HepG2 (cell line): ENCODE measurements at regions of chr10 and their contacts with region 1.

Region 1: DNA sequence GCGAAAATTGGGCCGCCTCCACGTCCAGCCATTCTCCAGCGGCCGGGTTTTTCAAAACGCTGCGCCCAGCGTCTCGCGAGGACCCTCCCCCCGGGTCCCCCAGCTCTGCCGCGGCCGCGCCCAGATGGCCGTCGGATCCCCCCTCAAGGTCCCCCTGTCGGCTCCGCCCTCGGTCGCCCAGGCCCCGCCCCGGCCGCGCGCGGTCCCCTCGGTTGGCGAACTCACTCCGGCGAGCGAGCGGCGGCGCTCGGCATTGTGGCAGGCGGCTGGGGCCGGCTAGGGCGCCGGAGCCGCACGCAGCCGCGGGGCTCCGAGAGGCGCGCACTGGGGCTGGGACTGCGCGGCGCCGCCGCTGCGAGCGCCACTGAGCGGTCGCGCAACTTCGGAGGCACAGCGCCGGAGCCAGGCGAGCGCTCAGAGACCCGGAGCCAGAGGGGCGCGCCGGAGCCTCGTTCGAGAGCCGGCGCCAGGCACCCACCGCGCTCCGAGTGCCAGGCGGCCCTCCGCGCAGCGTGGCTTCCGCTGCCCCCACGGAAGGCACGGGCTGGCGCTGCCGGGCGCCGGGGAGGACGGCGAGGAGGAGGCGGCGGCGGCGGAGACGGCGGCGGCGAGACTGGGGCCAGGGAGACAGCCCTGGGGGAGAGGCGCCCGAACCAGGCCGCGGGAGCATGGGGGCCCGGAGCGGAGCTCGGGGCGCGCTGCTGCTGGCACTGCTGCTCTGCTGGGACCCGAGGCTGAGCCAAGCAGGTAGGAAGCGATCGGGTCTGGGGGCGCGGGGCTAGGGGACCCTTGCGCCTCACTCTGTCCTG is at the start of gene UNC5B:
- DNase-seq: peak; percentile 54
- ATAC-seq: peak; percentile 89
- H3K4me3 ChIP-seq: peak within 1 kb of the TSS; percentile 29 to 55 (median 47); a peak in 5 of 6 replicates
- H3K27ac ChIP-seq: no peak within 1 kb of the TSS
- H3K4me1 ChIP-seq: peaks cover 29% of the 10 kb centered on the region
- H3K27me3 ChIP-seq: peaks cover 16 to 77% of the 10 kb centered on the region in 2 experiments
- CTCF ChIP-seq: peak; percentile 16; the same call in 1 of the 2 replicates
- EP300 ChIP-seq: no peak
- POLR2A ChIP-seq: no peak
- RAD21 ChIP-seq: peak; percentile 42
- total RNA-seq, gene UNC5B: 0.07 TPM in 1 of 2 replicates, not detected in the other

Region 2: GRCh38 chr10:70146489-70147258 is 1065.8 kb before region 1 on chr10 and contains the start of gene TYSND1:
- CTCF ChIA-PET with region 1: no interaction called
- POLR2A ChIA-PET with region 1: no interaction called
- in situ Hi-C with region 1: no loop called
- intact Hi-C with region 1: no loop called
- DNase-seq: peak; percentile 97
- ATAC-seq: peak; percentile 90
- H3K4me3 ChIP-seq: peak within 1 kb of the TSS; percentile 66 to 92 (median 77)
- H3K27ac ChIP-seq: peak within 1 kb of the TSS; percentile 81
- H3K4me1 ChIP-seq: peaks cover 24% of the 10 kb centered on the region
- H3K27me3 ChIP-seq: no peaks in the 10 kb centered on the region
- CTCF ChIP-seq: peak; percentile 97
- EP300 ChIP-seq: no peak; a peak in 1 of 4 replicates
- POLR2A ChIP-seq: peak; percentile 93 to 96
- RAD21 ChIP-seq: peak; percentile 83
- total RNA-seq, gene TYSND1: 6.8 and 8.9 TPM in 2 replicates

Region 3: GRCh38 chr10:70925377-70926225 is 286.9 kb before region 1 on chr10:
- CTCF ChIA-PET with region 1: interaction called, 10 read pairs
- POLR2A ChIA-PET with region 1: no interaction called
- in situ Hi-C with region 1: no loop called
- intact Hi-C with region 1: loop called (anchors 10 kb)
- DNase-seq: no peak
- ATAC-seq: peak; percentile 84
- H3K4me3 ChIP-seq: no peak overlapping the region
- H3K27ac ChIP-seq: no peak overlapping the region
- H3K4me1 ChIP-seq: no peaks in the 10 kb centered on the region
- H3K27me3 ChIP-seq: peaks cover 10 to 61% of the 10 kb centered on the region in 2 experiments
- CTCF ChIP-seq: peak; percentile 88
- EP300 ChIP-seq: no peak
- POLR2A ChIP-seq: no peak
- RAD21 ChIP-seq: peak; percentile 85

Region 4: DNA sequence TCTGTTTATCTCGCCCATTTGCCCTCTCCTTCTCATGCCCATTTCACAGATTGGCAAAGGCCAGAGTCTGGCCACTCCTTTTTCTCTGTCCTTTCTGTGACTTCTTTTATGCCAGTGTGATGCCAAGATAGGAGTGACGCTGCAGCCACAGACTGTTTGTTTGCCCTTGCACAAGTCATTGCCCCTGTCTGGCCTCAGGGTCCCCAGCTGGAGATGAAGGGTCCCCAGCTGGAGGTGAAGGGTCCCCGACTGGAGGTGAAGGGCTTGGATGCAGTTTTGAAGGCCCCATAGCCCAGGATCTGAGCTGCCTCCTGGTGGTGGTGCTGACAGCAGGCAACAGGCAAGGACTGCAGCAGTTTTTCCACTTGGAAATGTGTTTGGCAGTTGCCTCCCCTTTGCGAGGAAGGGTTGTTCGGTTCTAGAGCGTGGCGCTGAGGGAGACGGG is 55.7 kb after region 1 on chr10:
- CTCF ChIA-PET with region 1: no interaction called
- POLR2A ChIA-PET with region 1: no interaction called
- in situ Hi-C with region 1: no loop called
- intact Hi-C with region 1: loop called (anchors 2 kb)
- DNase-seq: peak; percentile 10
- ATAC-seq: peak; percentile 53
- H3K4me3 ChIP-seq: no peak overlapping the region
- H3K27ac ChIP-seq: no peak overlapping the region
- H3K4me1 ChIP-seq: peaks cover 13% of the 10 kb centered on the region
- H3K27me3 ChIP-seq: peaks cover 0 to 7% of the 10 kb centered on the region in 2 experiments; a peak in 2 of 5 replicates
- CTCF ChIP-seq: peak; percentile 60
- EP300 ChIP-seq: no peak
- POLR2A ChIP-seq: no peak
- RAD21 ChIP-seq: no peak